Posterior vena cava (tissue), 2 donors: ENCODE measurements at regions of chr13 and their contacts with region 1.

Region 1: GRCh38 chr13:21043898-21044297 is 17.5 kb downstream of the LATS2 start:
- DNase-seq: no peak

Region 2: GRCh38 chr13:20969182-20969581 is 74.7 kb before region 1 on chr13:
- intact Hi-C with region 1: loop called in 1 of 2 experiments (anchors 10 kb)
- DNase-seq: no peak